Esophagus muscularis mucosa (tissue), 4 donors: ENCODE measurements at regions of chr4 and their contacts with region 1.

Region 1: GRCh38 chr4:7067452-7068278 is at the start of gene GRPEL1:
- DNase-seq: peak; percentile 100
- H3K4me3 ChIP-seq: peak within 1 kb of the TSS; percentile 78 to 92 (median 85)
- H3K27ac ChIP-seq: peak within 1 kb of the TSS; percentile 90 to 95 (median 92)
- H3K4me1 ChIP-seq: peaks cover 17 to 49% (median 43%) of the 10 kb centered on the region in 4 donors
- H3K27me3 ChIP-seq: no peaks in the 10 kb centered on the region
- CTCF ChIP-seq: peak in 1 of 3 experiments; percentile 4
- EP300 ChIP-seq: no peak
- POLR2A ChIP-seq: peak; percentile 97
- total RNA-seq, gene GRPEL1: 17.0 to 34.2 (median 27.5) TPM

Region 2: DNA sequence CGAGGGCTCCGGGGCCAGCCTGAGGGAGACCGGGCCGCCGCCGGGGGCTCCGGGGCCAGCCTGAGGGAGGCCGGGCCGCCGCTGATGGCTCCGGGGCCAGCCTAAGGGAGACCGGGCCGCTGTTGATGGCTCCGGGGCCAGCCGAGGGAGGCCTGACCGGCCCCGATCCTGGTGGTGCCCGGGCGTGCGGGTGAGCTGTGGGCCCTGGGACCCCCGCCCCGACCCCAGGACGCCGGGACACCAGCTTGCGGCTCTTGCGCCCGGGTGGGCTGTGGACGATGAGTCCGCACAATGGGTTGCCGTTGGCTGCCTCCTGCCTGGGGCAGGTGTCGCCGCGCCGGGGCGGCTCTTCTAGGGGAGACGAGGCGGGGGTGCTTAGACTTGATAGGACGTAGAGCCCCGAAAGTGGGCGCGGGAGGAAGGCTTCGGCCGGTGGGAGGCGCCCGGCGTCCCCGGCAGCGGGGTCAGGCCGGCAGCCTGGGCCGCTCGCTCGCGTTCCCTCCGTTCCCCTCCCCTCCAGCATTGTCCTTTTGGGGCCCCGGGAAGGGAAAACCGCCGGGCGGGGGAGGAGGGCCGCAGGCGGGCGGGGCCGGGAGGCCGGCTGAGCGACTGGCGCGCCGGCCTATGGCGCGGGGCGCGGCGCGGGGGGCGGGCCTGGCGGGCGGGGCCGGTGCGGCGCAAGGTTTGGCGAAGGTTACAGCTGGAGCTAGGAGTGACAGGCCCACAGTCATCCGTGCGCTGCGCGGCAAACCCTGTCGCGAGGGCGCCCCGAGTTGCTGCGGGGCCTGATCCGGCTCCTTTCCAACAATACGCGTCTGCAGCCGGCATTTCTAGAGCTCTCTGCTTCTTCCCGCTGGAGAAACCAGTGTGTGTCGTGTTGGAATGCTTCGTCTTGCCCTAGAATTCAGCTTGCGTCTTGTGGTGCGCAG is 284.3 kb before region 1 on chr4:
- intact Hi-C with region 1: no loop called
- DNase-seq: peak; percentile 95
- H3K4me3 ChIP-seq: peak overlapping the region; percentile 96 to 100 (median 98)
- H3K27ac ChIP-seq: peak overlapping the region; percentile 100
- H3K4me1 ChIP-seq: peaks cover 34 to 56% (median 55%) of the 10 kb centered on the region in 4 donors
- H3K27me3 ChIP-seq: peaks cover 0 to 5% (median 0%) of the 10 kb centered on the region in 4 donors
- CTCF ChIP-seq: peak in 1 of 3 experiments; percentile 19
- EP300 ChIP-seq: no peak
- POLR2A ChIP-seq: peak; percentile 38

Region 3: DNA sequence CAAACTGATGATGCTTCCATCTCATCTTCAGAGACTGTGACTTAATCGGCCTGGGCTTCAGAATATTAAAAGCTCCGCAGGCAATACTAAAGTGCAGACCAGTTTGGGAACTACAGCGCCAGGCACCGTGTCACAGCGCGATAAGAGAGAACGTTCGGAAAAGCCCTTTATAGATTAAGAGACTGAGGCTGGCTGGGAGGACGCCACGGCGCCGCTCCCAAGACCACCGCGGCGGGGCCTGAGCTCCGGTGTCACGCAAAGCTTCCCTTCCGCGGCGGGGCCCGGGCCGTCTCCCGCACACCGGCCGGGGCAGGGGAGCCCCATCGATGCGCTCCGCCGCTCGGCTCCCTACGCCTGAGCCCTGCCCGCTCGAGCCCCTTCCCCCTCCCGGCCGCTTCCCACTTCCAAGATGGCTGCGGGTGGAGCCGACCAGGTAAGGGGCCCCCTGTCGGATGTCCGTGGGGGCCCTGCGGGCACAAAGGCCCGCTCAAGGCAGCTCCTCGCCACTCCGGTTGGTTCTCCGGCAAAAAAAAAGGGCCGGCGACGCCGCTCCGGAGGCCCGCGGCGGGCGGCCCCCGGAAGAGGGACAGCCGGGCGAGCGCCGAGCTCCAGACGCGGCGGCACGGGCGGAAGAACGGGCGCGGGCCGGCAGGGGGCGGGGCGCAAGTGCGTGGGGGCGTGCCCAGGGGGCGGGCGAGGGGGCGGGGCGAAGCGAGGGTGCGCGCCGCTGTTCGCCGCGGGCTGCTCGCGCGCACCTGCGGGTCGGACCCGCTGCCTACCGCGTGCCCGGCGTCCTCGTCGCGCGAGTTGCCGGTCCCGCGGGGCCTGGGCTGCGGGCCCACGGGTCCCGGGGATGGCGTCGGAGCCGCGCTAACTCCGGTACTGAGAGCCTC is 158.3 kb before region 1 on chr4 and contains the start of gene TBC1D14:
- intact Hi-C with region 1: loop called (anchors 2 kb)
- DNase-seq: peak; percentile 97
- H3K4me3 ChIP-seq: peak within 1 kb of the TSS; percentile 72 to 90 (median 82)
- H3K27ac ChIP-seq: peak within 1 kb of the TSS; percentile 95 to 99 (median 98)
- H3K4me1 ChIP-seq: peaks cover 22 to 52% (median 48%) of the 10 kb centered on the region in 4 donors
- H3K27me3 ChIP-seq: peaks cover 0 to 5% (median 0%) of the 10 kb centered on the region in 4 donors
- CTCF ChIP-seq: peak in 2 of 3 experiments; percentile 20 to 35
- EP300 ChIP-seq: no peak
- POLR2A ChIP-seq: peak; percentile 45
- total RNA-seq, gene TBC1D14: 37.0 to 49.4 (median 44.2) TPM

Region 4: GRCh38 chr4:6974138-6974848 is 93.4 kb before region 1 on chr4:
- intact Hi-C with region 1: loop called (anchors 2 kb)
- DNase-seq: peak; percentile 95
- H3K4me3 ChIP-seq: no peak overlapping the region
- H3K27ac ChIP-seq: no peak overlapping the region
- H3K4me1 ChIP-seq: peaks cover 0 to 15% (median 11%) of the 10 kb centered on the region in 4 donors
- H3K27me3 ChIP-seq: no peaks in the 10 kb centered on the region
- CTCF ChIP-seq: peak; percentile 96 to 99 (median 98)
- EP300 ChIP-seq: no peak
- POLR2A ChIP-seq: no peak

Region 5: GRCh38 chr4:6986781-6987587 is 80.7 kb before region 1 on chr4:
- intact Hi-C with region 1: loop called (anchors 5 kb)
- DNase-seq: peak; percentile 98
- H3K4me3 ChIP-seq: peak overlapping the region; percentile 72 to 90 (median 89)
- H3K27ac ChIP-seq: peak overlapping the region; percentile 89 to 97 (median 94)
- H3K4me1 ChIP-seq: peaks cover 45 to 71% (median 66%) of the 10 kb centered on the region in 4 donors
- H3K27me3 ChIP-seq: no peaks in the 10 kb centered on the region
- CTCF ChIP-seq: peak in 1 of 3 experiments; percentile 5
- EP300 ChIP-seq: no peak
- POLR2A ChIP-seq: peak; percentile 55

Region 6: GRCh38 chr4:7042697-7043464 is 24.8 kb before region 1 on chr4 and contains the start of gene TADA2B:
- intact Hi-C with region 1: loop called (anchors 1 kb)
- DNase-seq: peak; percentile 99
- H3K4me3 ChIP-seq: peak within 1 kb of the TSS; percentile 95 to 100 (median 98)
- H3K27ac ChIP-seq: peak within 1 kb of the TSS; percentile 90 to 94 (median 92)
- H3K4me1 ChIP-seq: peaks cover 41 to 55% (median 50%) of the 10 kb centered on the region in 4 donors
- H3K27me3 ChIP-seq: no peaks in the 10 kb centered on the region
- CTCF ChIP-seq: peak; percentile 37 to 72 (median 50)
- EP300 ChIP-seq: no peak
- POLR2A ChIP-seq: no peak
- total RNA-seq, gene TADA2B: 19.9 to 31.7 (median 26.3) TPM